Uterus (tissue), 4 donors: ENCODE measurements at regions of chr10 and their contacts with region 1.

Region 1: DNA sequence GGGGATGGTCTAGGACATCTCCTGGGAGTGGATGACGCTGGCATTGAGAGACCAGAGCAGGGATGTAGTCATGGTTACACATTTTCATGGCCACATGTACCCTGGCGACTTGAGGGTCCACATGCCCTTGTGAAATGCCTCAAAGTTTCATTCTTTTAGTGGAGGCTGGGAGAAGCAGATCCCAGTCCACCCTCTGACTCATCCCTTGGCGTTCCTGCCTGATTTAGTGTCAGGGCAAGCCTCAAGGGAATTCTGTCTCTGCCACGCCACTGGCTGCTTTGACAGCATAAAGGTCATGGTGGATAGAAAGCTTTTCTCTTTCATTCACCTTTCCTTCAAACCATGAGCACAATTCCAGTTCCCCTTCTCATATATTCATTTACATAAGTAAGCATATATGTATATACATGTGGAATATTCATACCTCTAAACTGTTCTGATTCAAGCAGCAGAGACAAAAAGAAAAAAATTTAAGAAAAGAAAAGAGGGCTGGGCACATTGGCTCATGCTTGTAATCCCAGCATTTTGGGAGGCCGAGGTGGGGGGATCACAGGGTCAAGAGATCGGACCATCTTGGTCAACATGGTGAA is 21.8 kb upstream of the KIF5B start:
- DNase-seq: peak; percentile 28 to 41
- H3K4me3 ChIP-seq: no peak overlapping the region
- H3K27ac ChIP-seq: no peak overlapping the region
- H3K4me1 ChIP-seq: no peaks in the 10 kb centered on the region
- H3K27me3 ChIP-seq: no peaks in the 10 kb centered on the region
- CTCF ChIP-seq: no peak
- POLR2A ChIP-seq: no peak

Region 2: GRCh38 chr10:32125023-32125422 is 47.0 kb after region 1 on chr10:
- intact Hi-C with region 1: loop called (anchors 10 kb)
- DNase-seq: no peak
- H3K4me3 ChIP-seq: no peak overlapping the region
- H3K27ac ChIP-seq: no peak overlapping the region
- H3K4me1 ChIP-seq: no peaks in the 10 kb centered on the region
- H3K27me3 ChIP-seq: no peaks in the 10 kb centered on the region
- CTCF ChIP-seq: no peak
- POLR2A ChIP-seq: no peak